ENCODE measurements at regions of chr10 and their contacts with region 1.

Region 1: GRCh38 chr10:77641788-77642397 is 4.3 kb upstream of the KCNMA1 start:
- DNase-seq: peak; percentile 77
- ATAC-seq: no peak
- H3K4me3 Mint-ChIP-seq: no peak overlapping the region
- H3K27ac Mint-ChIP-seq: no peak overlapping the region
- H3K4me1 Mint-ChIP-seq: peaks cover 3% of the 10 kb centered on the region
- H3K27me3 Mint-ChIP-seq: peaks cover 39% of the 10 kb centered on the region

Region 2: DNA sequence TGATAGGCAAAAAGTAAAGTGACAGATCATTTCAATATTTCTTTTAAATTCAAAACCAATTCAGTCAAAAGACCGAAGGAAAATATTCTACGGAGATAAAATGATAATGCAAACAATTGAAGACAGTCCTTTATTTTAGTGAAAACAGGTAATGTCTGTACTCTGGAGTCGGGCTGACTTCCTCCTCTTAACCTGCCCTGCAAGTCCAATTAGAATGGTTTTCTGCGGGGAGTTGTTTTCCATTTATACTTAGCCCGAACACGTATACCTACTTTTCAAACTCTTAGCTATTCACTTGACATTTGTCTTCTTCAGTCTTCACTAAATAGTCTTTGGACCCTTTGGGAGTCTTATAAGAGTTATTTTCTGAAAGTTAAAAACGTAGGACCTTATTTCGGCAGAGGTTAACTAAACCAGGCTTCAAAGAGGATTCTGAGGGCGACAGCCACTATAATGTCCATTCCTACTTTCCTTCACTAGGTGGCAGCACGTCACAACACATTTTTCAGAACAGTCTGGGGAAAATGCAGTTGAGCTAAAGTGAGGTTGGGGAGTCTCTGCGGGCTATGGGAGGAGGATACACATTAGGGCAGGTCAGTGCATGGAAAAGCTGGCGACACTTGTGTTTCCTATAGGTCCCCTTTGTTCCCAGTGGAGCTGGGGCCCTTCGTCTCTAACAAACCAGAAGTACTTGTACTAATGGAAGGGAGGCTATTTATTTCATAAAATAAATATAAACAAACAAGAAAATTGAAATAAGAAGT is 476.3 kb before region 1 on chr10:
- CTCF ChIA-PET with region 1: interaction called, 47 read pairs
- POLR2A ChIA-PET with region 1: no interaction called
- DNase-seq: peak; percentile 56
- ATAC-seq: peak; percentile 70
- H3K4me3 Mint-ChIP-seq: no peak overlapping the region
- H3K27ac Mint-ChIP-seq: no peak overlapping the region
- H3K4me1 Mint-ChIP-seq: no peaks in the 10 kb centered on the region
- H3K27me3 Mint-ChIP-seq: peaks cover 27% of the 10 kb centered on the region

Region 3: GRCh38 chr10:77173615-77174461 is 468.1 kb before region 1 on chr10:
- CTCF ChIA-PET with region 1: interaction called, 81 read pairs
- POLR2A ChIA-PET with region 1: no interaction called
- DNase-seq: peak; percentile 80
- ATAC-seq: peak; percentile 57
- H3K4me3 Mint-ChIP-seq: no peak overlapping the region
- H3K27ac Mint-ChIP-seq: no peak overlapping the region
- H3K4me1 Mint-ChIP-seq: no peaks in the 10 kb centered on the region
- H3K27me3 Mint-ChIP-seq: peaks cover 2% of the 10 kb centered on the region

Region 4: DNA sequence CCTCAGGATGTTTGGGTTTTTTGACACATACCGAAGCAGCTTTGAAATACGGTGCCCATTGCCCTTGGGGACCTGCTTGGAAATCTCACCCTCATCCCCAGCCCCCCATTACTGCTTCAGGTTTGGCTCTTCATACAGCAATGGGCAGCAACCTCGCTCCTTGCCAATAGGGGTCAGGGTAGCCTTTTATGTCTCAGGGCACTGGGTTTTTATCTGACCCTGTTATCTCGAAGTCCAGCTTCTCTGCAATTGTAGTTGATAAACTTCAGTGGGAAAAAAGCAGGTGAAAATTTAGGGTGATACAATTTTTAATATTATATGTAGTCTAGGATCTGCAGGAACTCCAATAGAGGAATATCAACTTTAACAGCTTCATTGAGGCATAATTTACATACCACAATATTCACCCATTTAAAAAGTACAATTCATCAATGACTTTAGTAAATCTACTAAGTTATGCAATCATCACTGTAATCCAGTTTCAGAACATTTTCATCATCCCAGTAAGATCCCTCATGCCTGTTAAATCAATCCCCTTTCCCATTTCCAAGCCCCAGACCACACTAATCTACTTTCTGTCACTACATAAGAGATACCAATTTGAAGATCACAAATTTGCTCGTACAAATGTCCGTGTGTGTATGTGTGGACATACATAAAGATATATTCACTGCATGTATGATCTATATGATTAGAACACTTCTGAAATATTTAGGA is 390.4 kb before region 1 on chr10:
- CTCF ChIA-PET with region 1: interaction called, 11 read pairs
- POLR2A ChIA-PET with region 1: no interaction called
- DNase-seq: peak; percentile 42
- ATAC-seq: peak; percentile 49
- H3K4me3 Mint-ChIP-seq: no peak overlapping the region
- H3K27ac Mint-ChIP-seq: no peak overlapping the region
- H3K4me1 Mint-ChIP-seq: peaks cover 3% of the 10 kb centered on the region
- H3K27me3 Mint-ChIP-seq: peaks cover 2% of the 10 kb centered on the region